ENCODE measurements at regions of chr5 and their contacts with region 1.

Region 1: GRCh38 chr5:122192497-122193496 is 63.5 kb downstream of the ZNF474 start:
- DNase-seq: no peak
- H3K4me3 Mint-ChIP-seq: no peak overlapping the region
- H3K27ac Mint-ChIP-seq: no peak overlapping the region
- H3K4me1 Mint-ChIP-seq: peaks cover 5% of the 10 kb centered on the region
- H3K27me3 Mint-ChIP-seq: peaks cover 17% of the 10 kb centered on the region

Region 2: GRCh38 chr5:122154910-122155309 is 37.9 kb before region 1 on chr5:
- intact Hi-C with region 1: no loop called
- DNase-seq: no peak
- H3K4me3 Mint-ChIP-seq: no peak overlapping the region
- H3K27ac Mint-ChIP-seq: no peak overlapping the region
- H3K4me1 Mint-ChIP-seq: peaks cover 4% of the 10 kb centered on the region
- H3K27me3 Mint-ChIP-seq: no peaks in the 10 kb centered on the region

Region 3: DNA sequence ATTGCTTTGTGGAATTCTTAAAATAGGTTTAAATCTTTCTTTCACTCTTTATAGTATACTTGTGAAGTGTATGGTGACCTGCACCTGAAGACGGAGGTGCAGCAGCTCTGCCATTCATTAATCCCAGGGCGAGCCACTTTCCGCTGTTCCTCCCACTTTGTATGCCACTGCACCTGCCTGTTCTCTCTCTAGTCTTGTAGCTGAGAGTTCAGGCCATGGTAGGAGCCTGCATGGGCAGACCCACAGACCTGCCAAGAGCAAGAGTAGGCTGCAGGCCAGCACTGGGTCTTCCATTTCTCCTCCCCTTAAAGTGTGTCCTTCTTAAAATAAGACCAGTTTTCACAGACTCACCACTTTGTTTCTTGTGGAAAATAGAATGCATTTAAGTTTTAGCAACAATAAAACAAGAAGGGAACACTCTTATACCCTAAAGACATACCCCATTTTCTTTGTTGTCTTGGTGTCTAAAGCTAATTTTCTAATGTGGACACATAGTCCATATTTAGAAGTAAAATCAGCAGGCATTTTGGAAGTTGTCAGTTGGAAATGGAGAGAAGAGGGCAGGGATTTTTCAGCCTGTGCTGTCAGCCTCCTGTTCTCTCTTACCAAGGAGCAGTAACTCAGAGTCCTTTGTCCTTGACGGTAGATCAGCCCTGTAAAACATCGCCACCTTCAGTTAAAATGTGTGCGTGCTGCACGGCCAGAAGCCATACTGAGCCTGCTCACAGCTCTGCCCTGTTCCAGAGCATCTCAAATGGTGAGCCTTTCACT is 222.4 kb after region 1 on chr5:
- intact Hi-C with region 1: loop called (anchors 2 kb)
- DNase-seq: no peak
- H3K4me3 Mint-ChIP-seq: no peak overlapping the region
- H3K27ac Mint-ChIP-seq: no peak overlapping the region
- H3K4me1 Mint-ChIP-seq: no peaks in the 10 kb centered on the region
- H3K27me3 Mint-ChIP-seq: no peaks in the 10 kb centered on the region